Ovary (tissue), 10 donors: ENCODE measurements at regions of chr9 and their contacts with region 1.

Region 1: DNA sequence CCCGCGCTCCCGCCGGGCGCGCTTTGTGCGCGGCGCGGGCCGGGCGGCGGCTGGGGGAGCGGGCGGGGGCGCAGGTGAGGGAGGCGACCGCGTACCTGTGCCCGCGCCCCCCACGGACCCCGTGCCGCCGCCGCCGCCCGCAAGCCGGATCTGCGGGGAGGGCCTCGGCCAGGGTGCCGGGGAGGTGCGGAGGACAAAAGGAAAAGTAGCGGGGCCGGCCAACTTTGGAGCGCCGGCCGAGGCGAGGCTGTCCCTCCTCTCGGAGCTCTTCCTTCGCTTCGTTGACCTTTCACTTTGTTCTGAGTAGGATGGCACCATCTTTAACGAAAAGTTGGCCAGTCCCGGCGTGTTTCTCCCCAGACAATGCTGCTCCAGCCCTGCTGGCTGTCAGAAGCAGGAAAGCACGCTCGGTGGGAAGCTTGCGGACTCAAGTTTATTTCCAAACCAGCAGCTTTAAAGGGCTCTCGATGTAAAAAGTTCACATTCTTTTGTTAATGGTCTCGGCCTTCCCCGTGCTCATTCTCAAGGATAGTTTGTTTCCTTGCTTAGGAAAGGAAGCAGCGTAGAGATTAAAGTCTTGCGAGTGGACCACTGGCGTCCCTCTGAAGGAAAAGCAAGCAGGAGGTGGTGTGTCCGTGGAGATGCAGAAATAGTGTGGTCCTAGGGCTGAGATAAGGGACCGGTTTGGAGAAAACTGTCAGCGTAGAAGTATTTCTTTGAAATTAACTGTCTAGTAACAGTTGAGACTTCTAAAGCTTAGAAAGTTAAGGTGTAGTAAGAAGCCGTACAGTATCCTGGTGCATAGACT is 639 bp downstream of the EHMT1 start:
- DNase-seq: peak in 4 of 5 donors; percentile 42 to 61 (median 58)
- H3K4me3 ChIP-seq: peak overlapping the region; percentile 66
- H3K27ac ChIP-seq: peak overlapping the region in 1 of 2 donors; percentile 66
- H3K4me1 ChIP-seq: peaks cover 15% of the 10 kb centered on the region
- H3K27me3 ChIP-seq: no peaks in the 10 kb centered on the region
- CTCF ChIP-seq: no peak
- EP300 ChIP-seq: no peak
- POLR2A ChIP-seq: no peak

Region 2: DNA sequence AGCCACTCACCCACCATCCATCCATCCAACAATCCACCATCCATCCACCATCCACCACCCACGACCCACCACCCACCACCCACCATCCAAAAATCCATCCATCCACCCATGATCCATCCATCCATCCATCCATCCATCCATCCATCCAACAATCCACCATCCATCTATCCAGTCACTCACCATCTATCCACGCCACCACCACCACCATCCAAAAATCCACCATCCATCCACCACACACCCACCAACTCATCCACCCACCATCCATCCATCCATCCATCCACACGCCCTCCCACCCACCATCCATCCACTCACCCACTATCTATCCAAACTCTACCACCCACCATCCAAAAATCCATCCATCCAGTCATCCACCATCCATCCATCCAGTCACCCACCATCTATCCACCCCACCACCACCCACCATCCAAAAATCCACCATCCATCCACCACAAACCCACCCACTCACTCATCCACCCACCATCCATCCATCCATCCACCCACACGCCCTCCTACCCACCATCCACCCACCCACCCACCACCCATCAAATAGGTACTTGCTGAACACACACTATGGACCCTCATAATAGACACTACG is 49.7 kb before region 1 on chr9:
- intact Hi-C with region 1: no loop called
- DNase-seq: no peak
- H3K4me3 ChIP-seq: no peak overlapping the region
- H3K27ac ChIP-seq: no peak overlapping the region
- H3K4me1 ChIP-seq: no peaks in the 10 kb centered on the region
- H3K27me3 ChIP-seq: no peaks in the 10 kb centered on the region
- CTCF ChIP-seq: no peak
- EP300 ChIP-seq: no peak
- POLR2A ChIP-seq: no peak

Region 3: DNA sequence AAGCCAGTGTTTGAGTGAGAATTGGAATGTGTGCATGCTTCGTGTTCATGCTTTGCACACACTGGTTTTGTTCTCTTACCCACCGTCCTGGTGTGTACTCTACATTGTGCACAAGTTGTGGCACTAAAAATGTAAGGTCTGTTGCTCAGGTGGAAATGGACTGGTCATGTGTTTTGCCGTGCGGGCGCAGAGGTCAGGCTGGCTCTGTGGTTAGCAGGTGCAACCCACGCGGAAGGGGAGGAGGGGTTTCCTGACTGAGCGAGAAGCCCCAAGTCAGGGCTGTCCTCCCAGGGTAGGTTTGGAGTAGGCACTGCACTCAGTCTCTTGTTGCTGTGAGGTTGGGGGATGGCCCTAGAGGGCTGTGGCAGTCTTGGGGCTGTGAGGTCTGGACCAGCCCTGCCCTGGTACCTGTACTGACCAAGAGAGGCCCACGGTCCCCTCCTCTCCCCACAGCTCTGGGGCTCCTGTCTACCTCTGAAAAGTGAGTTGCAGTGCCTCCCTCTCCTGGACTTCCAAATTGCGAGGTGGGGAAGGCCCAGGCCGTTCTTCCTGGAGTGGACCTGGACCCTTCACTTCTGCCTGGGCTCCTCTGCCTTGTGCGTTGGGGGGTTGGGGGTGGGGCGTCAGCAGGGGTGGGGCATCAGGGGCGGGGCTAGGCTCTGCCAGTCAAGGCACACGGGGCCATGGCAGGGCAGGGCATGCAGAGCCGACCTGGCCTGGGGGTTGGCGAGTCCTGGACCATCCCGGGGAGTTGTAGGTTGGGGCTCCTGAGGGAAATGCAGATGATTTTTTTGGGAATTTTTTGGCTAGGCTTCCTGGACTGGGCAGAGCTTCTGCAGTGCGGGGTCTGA is 86.2 kb after region 1 on chr9:
- intact Hi-C with region 1: loop called in 1 of 4 experiments (anchors 10 kb)
- DNase-seq: no peak
- H3K4me3 ChIP-seq: no peak overlapping the region
- H3K27ac ChIP-seq: no peak overlapping the region
- H3K4me1 ChIP-seq: peaks cover 23% of the 10 kb centered on the region
- H3K27me3 ChIP-seq: no peaks in the 10 kb centered on the region
- CTCF ChIP-seq: no peak
- EP300 ChIP-seq: no peak
- POLR2A ChIP-seq: no peak

Region 4: GRCh38 chr9:137723783-137724445 is 104.5 kb after region 1 on chr9:
- intact Hi-C with region 1: no loop called
- DNase-seq: no peak
- H3K4me3 ChIP-seq: no peak overlapping the region
- H3K27ac ChIP-seq: no peak overlapping the region
- H3K4me1 ChIP-seq: peaks cover 6% of the 10 kb centered on the region
- H3K27me3 ChIP-seq: no peaks in the 10 kb centered on the region
- CTCF ChIP-seq: no peak
- EP300 ChIP-seq: no peak
- POLR2A ChIP-seq: no peak